IMR-90 (cell line): ENCODE measurements at regions of chr18 and their contacts with region 1.

Region 1: GRCh38 chr18:22900558-22901238 is 32.4 kb upstream of the RBBP8 start:
- DNase-seq: peak; percentile 3
- ATAC-seq: no peak
- H3K4me3 ChIP-seq: no peak overlapping the region
- H3K27ac ChIP-seq: no peak overlapping the region
- H3K4me1 ChIP-seq: no peaks in the 10 kb centered on the region
- H3K27me3 ChIP-seq: peaks cover 2% of the 10 kb centered on the region; the same call in 1 of the 2 replicates
- CTCF ChIP-seq: no peak
- POLR2A ChIP-seq: no peak
- RAD21 ChIP-seq: no peak

Region 2: GRCh38 chr18:22813648-22814328 is 86.9 kb before region 1 on chr18:
- CTCF ChIA-PET with region 1: no interaction called
- POLR2A ChIA-PET with region 1: interaction called, 14 read pairs
- dilution Hi-C with region 1: no loop called
- in situ Hi-C with region 1: no loop called
- intact Hi-C with region 1: no loop called
- DNase-seq: peak; percentile 65
- ATAC-seq: peak; percentile 86
- H3K4me3 ChIP-seq: no peak overlapping the region
- H3K27ac ChIP-seq: no peak overlapping the region
- H3K4me1 ChIP-seq: no peaks in the 10 kb centered on the region
- H3K27me3 ChIP-seq: no peaks in the 10 kb centered on the region
- CTCF ChIP-seq: peak; percentile 85
- POLR2A ChIP-seq: peak; percentile 52; the same call in 1 of the 2 replicates
- RAD21 ChIP-seq: peak; percentile 96

Region 3: GRCh38 chr18:23003289-23003688 is 102.6 kb after region 1 on chr18:
- CTCF ChIA-PET with region 1: no interaction called
- POLR2A ChIA-PET with region 1: no interaction called
- dilution Hi-C with region 1: no loop called
- in situ Hi-C with region 1: no loop called
- intact Hi-C with region 1: no loop called
- DNase-seq: no peak
- ATAC-seq: no peak
- H3K4me3 ChIP-seq: no peak overlapping the region
- H3K27ac ChIP-seq: no peak overlapping the region
- H3K4me1 ChIP-seq: peaks cover 4% of the 10 kb centered on the region; the same call in 1 of the 2 replicates
- H3K27me3 ChIP-seq: no peaks in the 10 kb centered on the region
- CTCF ChIP-seq: no peak
- POLR2A ChIP-seq: no peak
- RAD21 ChIP-seq: no peak